ENCODE measurements at regions of chr16 and their contacts with region 1.

Region 1: GRCh38 chr16:84504420-84505248 is at the start of gene MEAK7:
- DNase-seq: peak; percentile 95 to 98 (median 97)
- ATAC-seq: peak; percentile 94
- H3K4me3 ChIP-seq: peak within 1 kb of the TSS; percentile 74 to 83
- H3K4me3 Mint-ChIP-seq: peak within 1 kb of the TSS; percentile 90
- H3K27ac ChIP-seq: peak within 1 kb of the TSS; percentile 43
- H3K27ac Mint-ChIP-seq: peak within 1 kb of the TSS; percentile 84
- H3K4me1 ChIP-seq: peaks cover 56% of the 10 kb centered on the region
- H3K4me1 Mint-ChIP-seq: peaks cover 57% of the 10 kb centered on the region
- H3K27me3 ChIP-seq: peaks cover 0 to 2% of the 10 kb centered on the region in 2 experiments
- H3K27me3 Mint-ChIP-seq: no peaks in the 10 kb centered on the region
- CTCF ChIP-seq: no peak
- total RNA-seq, gene MEAK7: 2.1 to 2.2 TPM

Region 2: GRCh38 chr16:83952940-83953795 is 551.5 kb before region 1 on chr16 and contains the start of gene OSGIN1:
- CTCF ChIA-PET with region 1: no interaction called
- POLR2A ChIA-PET with region 1: no interaction called
- intact Hi-C with region 1: loop called in 1 of 2 experiments (anchors 5 kb)
- DNase-seq: peak in 7 of 9 experiments; percentile 31 to 62 (median 36)
- ATAC-seq: peak; percentile 57
- H3K4me3 ChIP-seq: no peak within 1 kb of the TSS
- H3K4me3 Mint-ChIP-seq: no peak within 1 kb of the TSS
- H3K27ac ChIP-seq: no peak within 1 kb of the TSS
- H3K27ac Mint-ChIP-seq: no peak within 1 kb of the TSS
- H3K4me1 ChIP-seq: no peaks in the 10 kb centered on the region
- H3K4me1 Mint-ChIP-seq: peaks cover 2% of the 10 kb centered on the region
- H3K27me3 ChIP-seq: peaks cover 0 to 28% of the 10 kb centered on the region in 2 experiments
- H3K27me3 Mint-ChIP-seq: peaks cover 19% of the 10 kb centered on the region
- CTCF ChIP-seq: no peak
- total RNA-seq, gene OSGIN1: 0.84 to 1.0 TPM

Region 3: DNA sequence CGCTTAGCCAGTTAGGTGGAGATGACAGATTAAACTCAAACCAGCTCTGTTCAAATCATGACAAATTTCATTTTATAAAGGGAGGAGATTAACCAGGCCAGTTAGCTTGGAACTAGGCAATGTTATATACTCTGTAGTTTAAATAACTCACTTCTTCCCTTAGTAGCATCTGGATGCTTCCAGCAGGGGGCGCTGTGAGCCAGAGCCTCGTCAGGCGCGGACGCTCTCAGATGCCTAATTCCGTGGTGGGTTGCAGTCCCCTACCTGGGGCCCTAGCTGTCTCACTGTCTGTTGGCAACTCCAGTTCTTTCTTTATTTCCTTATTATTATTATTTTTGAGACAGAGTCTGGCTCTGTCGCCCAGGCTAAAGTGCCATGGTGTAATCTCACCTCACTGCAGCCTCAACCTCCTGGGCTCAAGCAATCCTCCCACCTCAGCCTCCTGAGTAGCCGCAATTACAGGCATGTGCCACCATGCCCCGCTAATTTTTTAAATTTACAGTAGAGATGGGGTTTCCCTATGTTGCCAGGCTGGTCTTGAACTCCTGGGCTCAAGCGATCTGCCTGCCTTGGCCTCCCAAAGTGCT is 227.3 kb before region 1 on chr16:
- CTCF ChIA-PET with region 1: interaction called, 27 read pairs
- POLR2A ChIA-PET with region 1: no interaction called
- intact Hi-C with region 1: loop called in 1 of 2 experiments (anchors 1 kb)
- DNase-seq: peak; percentile 43 to 80 (median 67)
- ATAC-seq: peak; percentile 62
- H3K4me3 ChIP-seq: no peak overlapping the region
- H3K4me3 Mint-ChIP-seq: no peak overlapping the region
- H3K27ac ChIP-seq: no peak overlapping the region
- H3K27ac Mint-ChIP-seq: no peak overlapping the region
- H3K4me1 ChIP-seq: no peaks in the 10 kb centered on the region
- H3K4me1 Mint-ChIP-seq: peaks cover 1% of the 10 kb centered on the region
- H3K27me3 ChIP-seq: no peaks in the 10 kb centered on the region
- H3K27me3 Mint-ChIP-seq: peaks cover 5% of the 10 kb centered on the region
- CTCF ChIP-seq: peak; percentile 82

Region 4: GRCh38 chr16:84532291-84532724 is 27.7 kb after region 1 on chr16:
- CTCF ChIA-PET with region 1: interaction called, 10 read pairs
- POLR2A ChIA-PET with region 1: no interaction called
- intact Hi-C with region 1: no loop called
- DNase-seq: no peak
- ATAC-seq: no peak
- H3K4me3 ChIP-seq: no peak overlapping the region
- H3K4me3 Mint-ChIP-seq: no peak overlapping the region
- H3K27ac ChIP-seq: no peak overlapping the region
- H3K27ac Mint-ChIP-seq: no peak overlapping the region
- H3K4me1 ChIP-seq: no peaks in the 10 kb centered on the region
- H3K4me1 Mint-ChIP-seq: peaks cover 13% of the 10 kb centered on the region
- H3K27me3 ChIP-seq: no peaks in the 10 kb centered on the region
- H3K27me3 Mint-ChIP-seq: no peaks in the 10 kb centered on the region
- CTCF ChIP-seq: no peak

Region 5: DNA sequence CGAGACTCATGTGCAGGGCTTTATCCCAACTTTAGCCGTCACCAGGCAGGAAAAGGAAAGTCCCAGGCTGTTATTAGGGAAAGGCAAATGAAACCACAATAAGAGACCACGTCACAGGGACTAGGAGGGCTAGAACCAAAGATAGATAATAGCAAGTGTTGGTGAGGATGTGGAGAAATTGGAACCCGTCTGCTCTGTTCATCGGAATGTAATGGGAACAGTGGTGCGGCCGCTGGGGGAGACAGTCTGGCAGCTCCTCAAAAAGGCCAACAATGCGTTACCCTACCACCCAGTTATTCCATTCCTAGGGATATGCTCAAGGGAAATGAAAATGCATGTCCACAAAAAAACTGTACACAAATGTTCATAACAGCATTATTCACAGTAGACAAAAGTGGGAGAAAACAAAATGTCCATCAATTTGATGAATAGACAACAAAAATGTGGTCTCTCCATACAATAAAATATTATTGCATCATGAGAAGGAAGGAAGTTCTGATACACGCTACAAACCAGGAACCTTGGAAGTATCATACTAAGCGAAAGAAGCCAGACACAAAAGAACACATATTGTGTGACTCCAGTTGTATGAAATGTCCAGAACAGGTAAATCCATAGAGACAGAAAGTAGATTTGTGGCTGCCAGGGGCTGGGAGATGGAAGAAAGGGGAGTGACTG is 175.7 kb after region 1 on chr16:
- CTCF ChIA-PET with region 1: no interaction called
- POLR2A ChIA-PET with region 1: no interaction called
- intact Hi-C with region 1: no loop called
- DNase-seq: no peak
- ATAC-seq: no peak
- H3K4me3 ChIP-seq: no peak overlapping the region
- H3K4me3 Mint-ChIP-seq: no peak overlapping the region
- H3K27ac ChIP-seq: no peak overlapping the region
- H3K27ac Mint-ChIP-seq: no peak overlapping the region
- H3K4me1 ChIP-seq: no peaks in the 10 kb centered on the region
- H3K4me1 Mint-ChIP-seq: no peaks in the 10 kb centered on the region
- H3K27me3 ChIP-seq: no peaks in the 10 kb centered on the region
- H3K27me3 Mint-ChIP-seq: peaks cover 6% of the 10 kb centered on the region
- CTCF ChIP-seq: no peak

Region 6: DNA sequence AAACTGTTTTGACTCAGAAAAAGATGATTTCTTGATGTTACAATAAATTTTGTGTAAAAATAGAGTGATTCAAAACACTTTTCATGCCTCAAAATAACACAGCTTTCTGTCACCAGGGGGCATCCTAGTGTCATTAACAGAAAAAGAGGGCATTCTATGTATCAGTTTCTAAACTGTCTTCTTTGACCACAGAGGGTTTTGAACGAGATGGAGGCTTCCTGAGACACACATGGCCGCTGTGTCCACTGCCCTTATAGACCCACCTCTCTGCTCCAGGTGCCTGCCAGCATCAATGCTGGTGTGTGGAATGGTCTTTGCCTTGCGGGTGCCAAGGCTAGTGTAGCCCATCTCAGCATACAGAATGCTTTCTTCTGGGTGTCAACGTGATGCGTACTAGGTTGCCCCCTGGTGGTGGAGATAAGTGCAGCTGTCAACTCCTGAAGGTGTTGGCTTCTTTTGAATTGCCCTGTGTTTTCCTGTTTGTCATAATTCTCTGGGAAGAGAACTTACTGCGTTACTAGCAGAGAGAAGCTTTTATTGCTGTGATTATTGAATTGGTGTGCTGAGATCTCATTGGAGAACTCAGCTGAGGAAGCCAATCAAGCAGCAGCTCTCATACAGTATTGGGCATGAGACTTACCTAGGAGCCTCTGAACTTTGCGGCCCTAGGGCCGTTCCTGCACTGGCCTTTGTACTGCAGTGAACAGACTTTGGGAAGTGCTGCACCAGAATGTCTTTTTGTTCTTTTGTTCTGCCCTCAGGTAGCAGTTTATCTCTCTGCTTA is 233.8 kb after region 1 on chr16:
- CTCF ChIA-PET with region 1: interaction called, 12 read pairs
- POLR2A ChIA-PET with region 1: interaction called, 7 read pairs
- intact Hi-C with region 1: no loop called
- DNase-seq: peak; percentile 44 to 87 (median 78)
- ATAC-seq: peak; percentile 82
- H3K4me3 ChIP-seq: peak overlapping the region in 1 of 2 experiments; percentile 18
- H3K4me3 Mint-ChIP-seq: peak overlapping the region; percentile 53
- H3K27ac ChIP-seq: no peak overlapping the region
- H3K27ac Mint-ChIP-seq: peak overlapping the region; percentile 64
- H3K4me1 ChIP-seq: peaks cover 23% of the 10 kb centered on the region
- H3K4me1 Mint-ChIP-seq: peaks cover 48% of the 10 kb centered on the region
- H3K27me3 ChIP-seq: no peaks in the 10 kb centered on the region
- H3K27me3 Mint-ChIP-seq: no peaks in the 10 kb centered on the region
- CTCF ChIP-seq: peak; percentile 84

Measured in CD8-positive, alpha-beta T cell (primary cell).